A549 (cell line): ENCODE measurements at regions of chr22 and their contacts with region 1.

Region 1: DNA sequence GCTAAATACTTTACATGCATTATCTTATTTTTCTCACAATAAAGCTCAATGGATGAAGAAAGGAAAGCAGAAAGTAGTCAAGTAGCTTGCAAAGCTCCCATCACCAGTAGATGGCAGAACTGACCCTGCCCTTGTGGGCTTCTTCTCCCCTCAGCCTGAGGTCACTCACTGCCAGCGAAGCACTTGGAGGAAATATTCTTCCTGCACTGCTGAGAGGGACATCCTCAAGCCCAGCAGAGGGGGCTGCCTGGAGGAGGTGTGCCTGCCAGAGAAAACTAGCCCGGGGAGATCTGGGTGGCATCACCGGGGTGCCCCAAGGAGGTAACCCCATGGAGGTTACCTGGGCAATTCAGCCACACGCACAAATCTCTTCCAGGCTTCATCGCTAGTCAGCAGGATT is 6.6 kb downstream of the APOL4 start:
- DNase-seq: peak; percentile 24 to 59
- ATAC-seq: peak; percentile 86 to 96
- H3K4me3 ChIP-seq: no peak overlapping the region
- H3K27ac ChIP-seq: no peak overlapping the region
- H3K4me1 ChIP-seq: no peaks in the 10 kb centered on the region
- CTCF ChIP-seq: peak; percentile 57
- EP300 ChIP-seq: no peak
- POLR2A ChIP-seq: no peak
- RAD21 ChIP-seq: peak; percentile 64 to 66

Region 2: GRCh38 chr22:36184433-36185025 is 10.4 kb before region 1 on chr22:
- CTCF ChIA-PET with region 1: interaction called, 21 read pairs
- POLR2A ChIA-PET with region 1: no interaction called
- DNase-seq: no peak
- ATAC-seq: no peak
- H3K4me3 ChIP-seq: no peak overlapping the region
- H3K27ac ChIP-seq: no peak overlapping the region
- H3K4me1 ChIP-seq: no peaks in the 10 kb centered on the region
- CTCF ChIP-seq: no peak
- EP300 ChIP-seq: no peak
- POLR2A ChIP-seq: no peak
- RAD21 ChIP-seq: no peak

Region 3: GRCh38 chr22:36215981-36216380 is 21.0 kb after region 1 on chr22:
- CTCF ChIA-PET with region 1: interaction called, 14 read pairs
- POLR2A ChIA-PET with region 1: no interaction called
- DNase-seq: no peak
- ATAC-seq: no peak
- H3K4me3 ChIP-seq: no peak overlapping the region
- H3K27ac ChIP-seq: no peak overlapping the region
- H3K4me1 ChIP-seq: peaks cover 5% of the 10 kb centered on the region; the same call in 1 of the 3 replicates
- CTCF ChIP-seq: no peak
- EP300 ChIP-seq: no peak
- POLR2A ChIP-seq: no peak
- RAD21 ChIP-seq: no peak

Region 4: GRCh38 chr22:36239401-36240171 is 44.6 kb after region 1 on chr22 and contains the start of gene APOL2:
- CTCF ChIA-PET with region 1: interaction called, 14 read pairs
- POLR2A ChIA-PET with region 1: interaction called, 3 read pairs
- DNase-seq: peak; percentile 82 to 85
- ATAC-seq: peak; percentile 99
- H3K4me3 ChIP-seq: peak within 1 kb of the TSS; percentile 60
- H3K27ac ChIP-seq: peak within 1 kb of the TSS; percentile 73 to 92
- H3K4me1 ChIP-seq: peaks cover 18% of the 10 kb centered on the region
- CTCF ChIP-seq: peak; percentile 28; the same call in 1 of the 3 replicates
- EP300 ChIP-seq: no peak
- POLR2A ChIP-seq: no peak
- RAD21 ChIP-seq: peak; percentile 19 to 28; a peak in 2 of 5 replicates
- polyA plus RNA-seq, gene APOL2: 8.7 and 12.3 TPM in 2 replicates

Region 5: DNA sequence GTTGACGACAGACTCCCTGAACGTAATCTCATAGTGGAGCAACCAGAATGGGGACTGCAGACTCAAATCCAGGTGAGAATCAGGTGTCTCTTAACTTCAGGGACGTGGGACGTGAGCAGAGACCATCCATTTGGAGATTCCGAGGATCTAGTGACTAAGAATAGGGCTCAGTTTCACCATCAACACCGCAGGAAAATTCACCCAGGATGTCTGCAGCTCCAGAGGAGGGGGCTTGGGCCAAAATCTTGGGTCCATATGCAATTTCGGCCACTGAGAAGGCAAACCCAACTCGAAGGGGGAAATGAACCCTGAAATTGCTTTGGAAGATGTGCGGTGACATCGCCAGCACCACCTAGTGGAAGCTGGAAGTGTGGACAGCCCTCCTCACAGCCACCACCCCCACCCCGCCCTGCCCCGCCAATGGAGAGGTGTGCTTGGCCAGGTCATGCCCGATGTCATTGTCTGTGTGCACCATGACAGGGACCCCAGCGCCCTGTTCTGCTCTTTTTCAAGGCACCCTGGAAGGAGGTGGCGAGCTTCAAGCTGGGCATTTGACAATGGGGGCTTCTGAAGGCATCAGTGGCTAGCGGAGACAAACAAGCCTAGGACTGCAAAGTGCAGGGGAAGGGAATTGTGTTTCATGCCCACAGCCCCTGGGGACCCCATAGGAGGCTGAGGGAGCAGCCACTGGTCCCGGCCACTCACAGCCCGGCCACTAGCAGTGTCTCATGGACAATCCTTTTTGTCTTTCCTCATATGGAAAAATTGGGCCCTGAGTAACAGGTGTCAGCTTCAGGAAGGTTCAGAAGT is 82.7 kb after region 1 on chr22:
- CTCF ChIA-PET with region 1: interaction called, 14 read pairs
- POLR2A ChIA-PET with region 1: interaction called, 4 read pairs
- DNase-seq: peak; percentile 31 to 62
- ATAC-seq: peak; percentile 84 to 93
- H3K4me3 ChIP-seq: no peak overlapping the region
- H3K27ac ChIP-seq: peak overlapping the region in 1 of 2 experiments; percentile 48; a peak in 1 of 6 replicates
- H3K4me1 ChIP-seq: 0 out of 3 replicates have a peak, but pooled peaks cover 2% of the 10 kb centered on the region
- CTCF ChIP-seq: peak; percentile 63
- EP300 ChIP-seq: no peak; a peak in 1 of 5 replicates
- POLR2A ChIP-seq: no peak
- RAD21 ChIP-seq: peak; percentile 46 to 57